Activated T-helper 2 cell treated with anti-CD3 and anti-CD28 coated beads, Interferon-gamma antibody, Interleukin-2, Interleukin-4, amounts not matched to agents 10 μg/mL and 5 μg/mL and 100 μg/mL, durations not matched to agents 14 hours and 24 hours and 36 hours (primary cell): ENCODE measurements at regions of chr1 and their contacts with region 1.

Region 1: DNA sequence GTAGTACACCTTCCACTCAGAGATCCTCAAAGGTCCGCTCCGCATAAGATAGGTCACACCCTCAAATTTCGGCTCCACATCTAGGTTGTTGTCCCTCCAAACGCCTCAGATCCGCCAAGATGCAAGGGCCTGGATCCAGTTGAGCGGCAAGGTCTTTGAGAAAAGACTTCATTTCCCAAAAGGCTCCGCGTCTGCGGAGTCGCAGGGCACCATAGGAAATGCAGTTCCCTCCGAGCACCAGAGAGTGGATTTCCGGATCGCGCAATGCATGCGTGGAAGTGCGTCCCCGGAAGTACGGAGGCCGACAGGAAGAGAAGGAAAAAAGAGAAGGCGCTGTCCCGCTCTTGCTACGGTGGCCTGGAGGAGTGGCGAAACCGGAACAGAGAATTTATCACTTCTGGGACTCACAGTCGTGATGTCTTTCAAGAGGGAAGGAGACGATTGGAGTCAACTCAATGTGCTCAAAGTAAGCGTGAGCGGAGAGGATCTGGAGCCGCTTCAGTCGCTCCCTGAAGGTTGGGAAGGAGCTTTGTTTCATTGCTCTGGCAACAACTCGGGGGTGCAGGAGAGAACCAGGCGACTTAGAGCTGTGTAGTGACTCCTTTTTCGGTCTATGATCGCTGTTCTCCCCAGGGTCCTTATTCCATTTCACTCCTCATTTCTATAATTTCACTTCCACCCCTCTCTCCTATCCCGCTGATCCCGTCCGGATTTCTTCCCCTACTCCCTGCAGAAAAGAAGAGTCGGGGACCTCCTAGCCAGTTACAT is at the starts of genes LYSMD1 and SCNM1:
- DNase-seq: peak; percentile 97
- H3K4me3 Mint-ChIP-seq: peak within 1 kb of the TSS; percentile 91
- H3K27ac Mint-ChIP-seq: peak within 1 kb of the TSS; percentile 91
- H3K4me1 Mint-ChIP-seq: peaks cover 36% of the 10 kb centered on the region
- H3K27me3 Mint-ChIP-seq: no peaks in the 10 kb centered on the region
- total RNA-seq, gene LYSMD1: 3.6 and 4.9 TPM in 2 replicates
- total RNA-seq, gene SCNM1: 82.4 and 89.1 TPM in 2 replicates

Region 2: GRCh38 chr1:151189638-151190445 is 23.9 kb after region 1 on chr1 and contains the start of gene VPS72:
- intact Hi-C with region 1: loop called (anchors 1 kb)
- DNase-seq: peak; percentile 85
- H3K4me3 Mint-ChIP-seq: peak within 1 kb of the TSS; percentile 93
- H3K27ac Mint-ChIP-seq: peak within 1 kb of the TSS; percentile 94
- H3K4me1 Mint-ChIP-seq: peaks cover 17% of the 10 kb centered on the region
- H3K27me3 Mint-ChIP-seq: peaks cover 3% of the 10 kb centered on the region
- total RNA-seq, gene VPS72: 80.7 and 84.5 TPM in 2 replicates

Region 3: DNA sequence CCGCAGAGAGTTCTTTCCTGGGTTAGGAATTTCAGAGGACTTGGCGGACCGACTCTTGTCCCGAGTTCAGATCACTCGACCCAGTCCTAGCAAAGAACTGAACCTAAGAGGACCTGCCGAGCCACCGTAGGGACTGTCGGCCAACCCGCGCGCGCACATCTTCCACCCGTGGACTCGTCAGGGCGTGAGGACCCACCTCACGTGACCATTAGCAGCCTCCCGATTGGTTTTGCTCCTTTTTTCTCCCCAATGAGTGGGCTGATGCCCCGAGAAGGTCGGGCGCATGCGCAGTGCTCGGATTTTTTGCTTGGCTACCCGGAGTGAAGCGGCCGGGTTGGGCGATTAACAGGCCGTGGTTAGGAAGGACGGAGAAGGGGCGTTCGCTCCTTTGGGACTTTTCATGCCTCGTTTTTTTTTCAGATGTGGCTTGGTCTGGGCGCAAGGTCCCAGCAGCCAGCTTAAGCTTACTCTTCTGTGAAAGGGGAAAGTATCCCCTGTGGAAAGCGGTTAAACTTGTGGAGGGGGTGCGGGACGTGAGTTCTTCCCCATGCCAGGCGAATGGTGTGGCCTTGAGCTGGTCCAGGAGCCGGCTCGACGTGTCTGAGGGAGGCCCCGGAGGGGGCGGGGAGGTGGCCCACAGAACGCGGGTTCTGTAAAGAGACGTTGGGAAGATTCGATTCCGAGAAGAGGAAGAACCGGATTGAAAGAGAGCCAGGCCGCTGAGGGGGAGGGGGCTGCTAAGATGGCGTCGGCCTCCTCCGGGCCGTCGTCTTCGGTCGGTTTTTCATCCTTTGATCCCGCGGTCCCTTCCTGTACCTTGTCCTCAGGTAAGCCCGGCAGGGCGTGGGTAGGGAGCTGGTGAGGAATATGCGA is 32.6 kb after region 1 on chr1 and contains the start of gene PIP5K1A:
- intact Hi-C with region 1: loop called (anchors 2 kb)
- DNase-seq: peak; percentile 97
- H3K4me3 Mint-ChIP-seq: peak within 1 kb of the TSS; percentile 99
- H3K27ac Mint-ChIP-seq: peak within 1 kb of the TSS; percentile 93
- H3K4me1 Mint-ChIP-seq: peaks cover 28% of the 10 kb centered on the region
- H3K27me3 Mint-ChIP-seq: peaks cover 3% of the 10 kb centered on the region
- total RNA-seq, gene PIP5K1A: 82.2 and 83.9 TPM in 2 replicates